PC-9 (cell line): ENCODE measurements at regions of chr7 and their contacts with region 1.

Region 1: GRCh38 chr7:44847508-44847920 is 373 bp downstream of the H2AZ2 start:
- DNase-seq: peak; percentile 76 to 94
- H3K4me3 ChIP-seq: peak overlapping the region; percentile 69
- H3K27ac ChIP-seq: peak overlapping the region; percentile 51
- H3K4me1 ChIP-seq: peaks cover 27% of the 10 kb centered on the region
- H3K27me3 ChIP-seq: no peaks in the 10 kb centered on the region
- CTCF ChIP-seq: peak; percentile 96

Region 2: DNA sequence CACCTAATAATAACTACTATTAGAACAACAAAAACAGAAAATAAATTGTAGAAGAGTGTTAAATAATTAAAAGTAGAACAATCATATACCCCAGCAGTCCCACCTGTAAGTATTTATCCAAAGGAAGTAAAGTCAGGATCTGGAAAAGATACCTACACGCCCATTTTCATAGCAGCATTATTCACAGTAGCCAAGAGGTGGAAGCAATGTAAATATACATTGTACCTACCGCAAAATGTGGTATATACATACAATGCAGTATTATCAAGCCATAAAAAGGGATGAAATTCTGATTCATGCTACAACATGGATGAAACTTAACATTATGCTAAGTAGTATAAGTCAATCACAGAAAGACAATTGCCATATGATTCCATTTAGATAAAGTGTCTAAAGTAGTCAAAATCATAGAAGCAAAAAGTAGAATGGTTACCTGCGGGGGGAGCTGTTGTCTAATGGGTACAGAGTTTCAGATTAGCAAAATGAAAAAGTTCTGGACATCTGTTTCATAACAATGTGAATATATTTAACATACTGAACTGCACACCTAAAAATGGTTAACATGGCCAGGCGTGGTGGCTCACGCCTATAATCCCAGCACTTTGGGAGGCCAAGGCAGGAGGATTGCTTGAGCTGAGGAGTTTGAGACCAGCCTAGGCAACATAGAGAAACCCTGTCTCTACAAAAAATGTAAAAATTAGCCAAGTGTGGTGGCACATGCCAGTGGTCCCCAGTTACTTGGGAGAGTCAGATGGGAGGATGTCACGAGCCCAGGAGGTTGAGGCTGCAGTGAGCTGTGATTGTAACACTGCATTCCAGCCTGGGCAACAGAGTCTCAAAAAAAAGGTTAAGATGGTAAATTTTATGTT is 259.4 kb before region 1 on chr7:
- CTCF ChIA-PET with region 1: interaction called, 3 read pairs
- POLR2A ChIA-PET with region 1: interaction called, 12 read pairs
- intact Hi-C with region 1: loop called (anchors 1 kb)
- DNase-seq: peak; percentile 69 to 74
- H3K4me3 ChIP-seq: no peak overlapping the region
- H3K27ac ChIP-seq: no peak overlapping the region
- H3K4me1 ChIP-seq: peaks cover 11% of the 10 kb centered on the region
- H3K27me3 ChIP-seq: no peaks in the 10 kb centered on the region
- CTCF ChIP-seq: peak; percentile 95

Region 3: GRCh38 chr7:44712012-44712411 is 135.5 kb before region 1 on chr7:
- CTCF ChIA-PET with region 1: no interaction called
- POLR2A ChIA-PET with region 1: no interaction called
- intact Hi-C with region 1: loop called (anchors 2 kb)
- DNase-seq: peak; percentile 87 to 97
- H3K4me3 ChIP-seq: no peak overlapping the region
- H3K27ac ChIP-seq: peak overlapping the region; percentile 69
- H3K4me1 ChIP-seq: peaks cover 52% of the 10 kb centered on the region
- H3K27me3 ChIP-seq: no peaks in the 10 kb centered on the region
- CTCF ChIP-seq: no peak

Region 4: DNA sequence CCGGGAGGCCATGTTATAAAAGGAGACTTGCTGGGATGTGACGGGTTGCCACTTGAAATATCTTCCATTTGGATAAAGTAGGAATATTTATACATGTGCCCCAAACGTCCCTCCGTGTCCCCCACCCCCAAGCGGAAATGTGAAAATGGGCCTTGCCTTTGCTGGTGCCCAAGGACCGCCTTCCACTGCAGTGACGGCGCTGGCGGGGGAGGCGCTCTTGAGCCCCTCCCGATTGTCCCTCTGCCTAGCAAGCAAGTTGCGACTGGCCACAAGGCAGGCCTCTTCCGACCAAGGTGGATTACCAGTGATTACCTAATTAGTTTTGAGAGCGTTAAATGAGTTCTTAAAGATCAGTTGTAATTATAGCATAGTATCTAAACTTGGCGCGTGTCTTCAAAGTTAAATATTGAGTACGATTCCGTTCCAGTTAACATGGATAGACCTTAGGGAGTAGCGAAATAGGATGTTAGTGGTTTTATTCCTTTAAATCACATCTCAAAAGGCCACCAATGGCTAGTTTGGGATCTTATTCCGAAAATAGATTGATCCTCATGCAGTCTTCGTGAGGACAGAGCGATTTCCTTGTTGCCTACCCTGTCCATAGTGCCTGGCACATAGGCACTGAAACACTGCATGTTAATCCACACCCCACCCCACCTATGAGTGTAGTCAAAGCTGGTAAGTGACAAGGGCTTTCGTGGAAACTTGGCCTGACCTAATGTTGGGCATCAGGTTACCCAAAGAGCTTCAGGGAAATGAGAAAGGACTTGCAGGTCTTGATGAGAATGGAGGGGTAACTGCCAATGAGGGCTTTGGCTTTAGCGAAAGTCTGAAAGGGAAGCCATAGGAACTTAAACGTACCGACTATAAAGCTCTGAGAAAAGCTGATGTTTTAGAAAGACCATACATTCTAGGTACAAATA is 49.9 kb before region 1 on chr7:
- CTCF ChIA-PET with region 1: no interaction called
- POLR2A ChIA-PET with region 1: no interaction called
- intact Hi-C with region 1: loop called (anchors 1 kb)
- DNase-seq: peak; percentile 87
- H3K4me3 ChIP-seq: peak overlapping the region; percentile 67
- H3K27ac ChIP-seq: peak overlapping the region; percentile 93
- H3K4me1 ChIP-seq: peaks cover 26% of the 10 kb centered on the region
- H3K27me3 ChIP-seq: no peaks in the 10 kb centered on the region
- CTCF ChIP-seq: peak; percentile 79; the same call in 1 of the 2 replicates

Region 5: DNA sequence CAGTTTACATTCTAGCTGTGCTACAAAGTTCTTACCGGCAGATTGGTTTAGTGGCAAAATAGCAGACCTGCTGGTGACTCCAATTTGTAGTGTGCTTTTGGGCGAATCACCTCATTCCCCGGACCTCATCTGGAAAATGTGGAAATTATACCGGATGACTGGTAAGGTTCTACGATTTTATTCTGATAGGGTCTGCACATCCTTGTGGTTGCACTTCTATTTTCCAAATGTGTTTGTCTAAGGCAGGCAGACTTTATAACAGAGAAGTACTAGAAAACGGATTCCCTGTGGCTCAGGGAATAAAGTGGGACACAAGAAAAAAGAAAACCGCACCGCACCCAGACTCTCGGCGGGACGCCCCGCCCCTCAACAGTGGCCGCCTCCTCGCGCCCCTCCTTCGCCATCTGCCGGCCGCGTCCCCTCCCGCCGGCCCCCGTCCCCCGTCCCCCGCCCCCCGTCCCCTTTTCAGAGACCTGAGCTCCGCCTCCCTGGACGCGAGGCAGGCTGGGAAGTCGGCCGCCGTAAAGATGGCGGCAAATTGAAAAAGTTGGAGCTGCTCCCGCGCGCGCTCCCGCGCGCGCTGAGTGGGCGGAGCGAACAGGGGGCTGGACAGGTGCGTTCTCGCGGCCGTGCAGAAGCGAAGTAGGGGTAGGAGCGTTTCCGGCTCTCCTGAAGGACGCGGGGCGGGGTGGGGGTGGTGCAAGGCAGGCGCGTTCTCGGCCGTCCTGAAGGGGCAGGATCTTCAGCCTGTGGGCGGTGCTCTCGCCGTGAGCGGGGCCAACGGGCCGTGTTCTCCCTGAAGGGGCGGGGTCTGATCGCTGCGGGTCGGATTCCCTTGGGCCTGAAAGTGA is 152.0 kb after region 1 on chr7:
- CTCF ChIA-PET with region 1: no interaction called
- POLR2A ChIA-PET with region 1: interaction called, 9 read pairs
- intact Hi-C with region 1: loop called (anchors 2 kb)
- DNase-seq: peak; percentile 98 to 100
- H3K4me3 ChIP-seq: peak overlapping the region; percentile 98
- H3K27ac ChIP-seq: peak overlapping the region; percentile 66
- H3K4me1 ChIP-seq: peaks cover 37% of the 10 kb centered on the region
- H3K27me3 ChIP-seq: no peaks in the 10 kb centered on the region
- CTCF ChIP-seq: no peak

Region 6: GRCh38 chr7:45306752-45307305 is 459.3 kb after region 1 on chr7:
- CTCF ChIA-PET with region 1: no interaction called
- POLR2A ChIA-PET with region 1: no interaction called
- intact Hi-C with region 1: no loop called
- DNase-seq: no peak
- H3K4me3 ChIP-seq: no peak overlapping the region
- H3K27ac ChIP-seq: no peak overlapping the region
- H3K4me1 ChIP-seq: no peaks in the 10 kb centered on the region
- H3K27me3 ChIP-seq: peaks cover 70% of the 10 kb centered on the region
- CTCF ChIP-seq: no peak